ENCODE measurements at regions of chr10 and their contacts with region 1.

Region 1: DNA sequence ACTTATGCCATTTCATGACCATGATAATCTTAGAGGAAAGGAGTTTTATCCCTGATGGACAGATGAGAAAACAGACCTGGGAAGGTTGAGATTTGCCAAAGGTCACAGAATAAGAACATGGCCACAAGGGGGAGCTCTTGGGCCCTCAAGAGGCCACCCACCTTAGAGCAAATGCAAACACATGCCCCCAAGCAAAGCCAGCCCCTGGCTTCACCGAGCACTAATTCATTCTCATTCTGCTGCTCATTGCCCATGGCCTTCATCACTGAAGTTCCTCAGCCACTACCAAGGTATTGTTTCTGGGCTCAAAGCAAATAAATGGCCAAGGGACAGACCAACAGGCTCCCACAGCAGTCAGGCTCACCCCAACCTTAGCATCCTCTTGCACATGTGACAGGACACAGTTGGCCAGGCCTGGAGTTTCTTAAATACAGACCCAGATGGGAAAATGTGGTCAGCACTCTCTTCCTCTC is 44.2 kb downstream of the PDLIM1 start:
- DNase-seq: no peak
- H3K4me3 ChIP-seq: no peak overlapping the region
- H3K27ac ChIP-seq: peak overlapping the region; percentile 93
- H3K27me3 ChIP-seq: no peaks in the 10 kb centered on the region
- CTCF ChIP-seq: peak; percentile 78

Region 2: DNA sequence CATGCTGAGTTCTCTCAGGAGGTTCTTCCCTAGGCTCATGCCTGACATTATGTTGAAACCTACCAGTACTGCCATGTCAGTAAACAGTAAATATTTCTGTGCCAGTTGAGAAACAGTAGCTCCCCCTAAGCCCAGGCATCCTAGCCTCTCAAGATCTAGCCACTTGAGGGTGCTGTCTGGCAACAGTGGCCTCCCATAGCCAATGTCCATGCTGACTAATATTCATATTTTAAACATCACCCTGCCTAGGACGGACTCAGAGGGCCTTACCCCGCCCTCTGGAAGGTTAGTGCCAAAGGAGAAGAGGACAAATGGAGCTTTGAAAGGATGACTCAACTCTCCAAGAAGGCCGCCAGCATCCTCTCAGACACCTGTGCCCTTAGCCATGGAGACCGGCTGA is 44.9 kb before region 1 on chr10:
- CTCF ChIA-PET with region 1: interaction called, 27 read pairs
- POLR2A ChIA-PET with region 1: no interaction called
- DNase-seq: no peak
- H3K4me3 ChIP-seq: no peak overlapping the region
- H3K27ac ChIP-seq: no peak overlapping the region
- H3K27me3 ChIP-seq: no peaks in the 10 kb centered on the region
- CTCF ChIP-seq: peak; percentile 55

Region 3: GRCh38 chr10:95260397-95260881 is 13.8 kb after region 1 on chr10:
- CTCF ChIA-PET with region 1: interaction called, 19 read pairs
- POLR2A ChIA-PET with region 1: interaction called, 4 read pairs
- DNase-seq: no peak
- H3K4me3 ChIP-seq: no peak overlapping the region
- H3K27ac ChIP-seq: peak overlapping the region; percentile 85
- H3K27me3 ChIP-seq: no peaks in the 10 kb centered on the region
- CTCF ChIP-seq: no peak

Region 4: DNA sequence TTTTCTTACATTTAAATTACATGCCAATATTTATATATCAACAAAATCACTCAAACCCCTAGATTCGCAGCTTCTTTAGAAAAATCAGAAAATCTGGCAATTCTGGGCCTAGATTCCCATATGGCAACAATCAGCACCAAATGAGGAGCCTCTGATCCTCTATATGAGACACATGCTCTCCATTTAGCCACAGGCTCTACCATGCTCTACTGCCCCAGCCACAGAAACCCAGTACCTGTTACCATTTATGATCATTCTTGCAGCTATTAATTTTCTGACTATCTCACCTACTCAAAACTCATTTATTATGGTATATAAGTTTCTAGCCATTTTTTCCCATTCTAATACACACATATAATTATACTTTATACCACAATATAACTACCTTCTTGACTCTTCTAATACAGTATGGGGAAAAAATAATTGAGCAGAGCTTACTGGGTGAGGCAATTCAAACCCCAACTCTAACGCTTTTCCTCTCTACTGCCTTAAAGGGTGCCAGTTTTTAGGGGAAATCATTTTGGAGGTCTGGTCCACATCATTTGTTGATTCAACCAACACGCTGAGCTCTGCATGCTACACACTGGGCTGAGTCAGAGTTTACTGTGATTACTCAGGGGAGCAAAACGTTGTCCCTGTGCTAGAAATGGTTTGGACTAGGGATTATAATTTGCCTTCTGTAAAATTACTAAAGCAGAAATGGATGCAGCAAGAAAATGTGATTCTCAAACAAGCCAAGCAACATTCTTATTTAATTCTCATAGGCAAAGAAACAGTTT is 32.6 kb after region 1 on chr10:
- CTCF ChIA-PET with region 1: interaction called, 31 read pairs
- POLR2A ChIA-PET with region 1: interaction called, 6 read pairs
- DNase-seq: no peak
- H3K4me3 ChIP-seq: no peak overlapping the region
- H3K27ac ChIP-seq: peak overlapping the region; percentile 77
- H3K27me3 ChIP-seq: no peaks in the 10 kb centered on the region
- CTCF ChIP-seq: no peak

Region 5: GRCh38 chr10:95341716-95342130 is 95.1 kb after region 1 on chr10:
- CTCF ChIA-PET with region 1: interaction called, 18 read pairs
- POLR2A ChIA-PET with region 1: no interaction called
- DNase-seq: no peak
- H3K4me3 ChIP-seq: no peak overlapping the region
- H3K27ac ChIP-seq: no peak overlapping the region
- H3K27me3 ChIP-seq: no peaks in the 10 kb centered on the region
- CTCF ChIP-seq: no peak

Region 6: GRCh38 chr10:95374597-95375209 is 128.1 kb after region 1 on chr10:
- CTCF ChIA-PET with region 1: interaction called, 21 read pairs
- POLR2A ChIA-PET with region 1: no interaction called
- DNase-seq: peak; percentile 10
- H3K4me3 ChIP-seq: no peak overlapping the region
- H3K27ac ChIP-seq: no peak overlapping the region
- H3K27me3 ChIP-seq: peaks cover 21% of the 10 kb centered on the region
- CTCF ChIP-seq: peak; percentile 70

Region 7: DNA sequence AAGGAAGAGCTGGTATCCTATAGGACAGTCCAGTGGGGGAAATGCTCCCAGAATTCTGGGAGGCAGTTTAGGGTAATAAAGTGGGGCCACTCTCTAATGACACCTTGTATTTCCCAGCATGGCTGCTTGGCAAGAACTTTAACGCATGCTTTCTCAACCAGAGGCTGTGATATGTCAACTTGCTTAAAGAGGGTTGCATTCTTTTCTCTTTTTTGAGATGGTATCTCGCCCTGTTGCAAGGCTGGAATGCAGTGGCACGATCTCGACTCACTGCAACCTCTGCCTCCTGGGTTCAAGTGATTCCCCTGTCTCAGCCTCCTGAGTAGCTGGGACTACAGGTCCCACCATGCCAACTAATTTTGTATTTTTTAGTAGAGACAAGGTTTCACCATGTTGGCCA is 371.5 kb after region 1 on chr10:
- CTCF ChIA-PET with region 1: no interaction called
- POLR2A ChIA-PET with region 1: no interaction called
- DNase-seq: no peak
- H3K4me3 ChIP-seq: no peak overlapping the region
- H3K27ac ChIP-seq: no peak overlapping the region
- H3K27me3 ChIP-seq: no peaks in the 10 kb centered on the region
- CTCF ChIP-seq: no peak

Measured in AG04450 (cell line).